ENCODE measurements at regions of chr7 and their contacts with region 1.

Region 1: GRCh38 chr7:112422842-112423496 is 27.3 kb upstream of the IFRD1 start:
- DNase-seq: peak; percentile 68

Region 2: DNA sequence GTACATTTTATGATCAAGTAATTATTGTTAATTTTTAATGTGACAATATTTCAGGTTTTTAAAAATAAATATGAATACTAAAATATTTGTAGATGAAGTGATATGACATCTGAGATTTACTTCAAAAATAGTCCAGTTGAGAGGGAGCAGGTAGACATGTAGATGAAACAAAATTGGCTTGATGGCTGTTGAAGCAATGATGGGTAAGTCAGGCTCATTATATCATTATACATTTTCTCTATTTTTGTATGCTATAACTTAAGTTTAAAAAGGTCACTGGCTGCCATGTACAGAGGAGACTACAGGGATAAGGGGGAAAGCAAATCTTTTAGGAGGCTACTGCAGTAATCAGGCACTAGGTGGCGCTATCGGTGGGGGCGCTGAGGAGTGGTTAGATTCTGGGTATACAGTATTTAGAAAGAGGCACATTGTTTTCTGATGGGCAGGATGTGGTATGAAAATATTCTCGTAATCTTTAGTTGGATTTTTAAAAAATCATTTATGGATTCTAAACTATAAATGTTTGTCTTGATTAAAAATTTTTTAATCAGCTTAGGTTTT is 670.9 kb before region 1 on chr7:
- in situ Hi-C with region 1: loop called (anchors 25 kb)
- DNase-seq: peak; percentile 90

Region 3: DNA sequence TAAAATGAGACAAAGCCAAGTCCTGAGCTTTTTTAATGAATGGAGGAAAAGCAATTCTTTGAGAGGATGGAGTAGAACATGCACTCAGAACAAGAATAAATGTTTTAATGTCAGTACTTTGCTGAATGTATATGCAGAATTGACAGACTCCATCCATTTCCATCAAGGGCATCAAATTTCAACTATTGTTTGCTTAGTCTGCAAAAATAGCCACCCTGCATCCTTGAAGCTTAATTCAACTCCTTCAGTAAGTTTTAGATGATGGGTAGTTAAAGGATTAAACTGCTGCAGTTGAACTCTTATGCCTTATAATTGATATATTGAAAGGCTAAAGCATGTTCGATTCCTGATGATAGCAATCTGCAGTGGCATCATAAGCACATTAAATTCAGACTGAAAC is 72.4 kb before region 1 on chr7:
- in situ Hi-C with region 1: no loop called
- DNase-seq: no peak